ENCODE measurements at regions of chr5 and their contacts with region 1.

Region 1: GRCh38 chr5:139262742-139263445 is 30.6 kb upstream of the MATR3 start:
- DNase-seq: peak; percentile 31
- H3K4me3 ChIP-seq: no peak overlapping the region
- H3K27me3 ChIP-seq: peaks cover 5% of the 10 kb centered on the region
- CTCF ChIP-seq: peak; percentile 97

Region 2: GRCh38 chr5:138579517-138579863 is 683.4 kb before region 1 on chr5:
- CTCF ChIA-PET with region 1: interaction called, 10 read pairs
- POLR2A ChIA-PET with region 1: no interaction called
- DNase-seq: no peak
- H3K4me3 ChIP-seq: no peak overlapping the region
- H3K27me3 ChIP-seq: no peaks in the 10 kb centered on the region
- CTCF ChIP-seq: no peak

Region 3: DNA sequence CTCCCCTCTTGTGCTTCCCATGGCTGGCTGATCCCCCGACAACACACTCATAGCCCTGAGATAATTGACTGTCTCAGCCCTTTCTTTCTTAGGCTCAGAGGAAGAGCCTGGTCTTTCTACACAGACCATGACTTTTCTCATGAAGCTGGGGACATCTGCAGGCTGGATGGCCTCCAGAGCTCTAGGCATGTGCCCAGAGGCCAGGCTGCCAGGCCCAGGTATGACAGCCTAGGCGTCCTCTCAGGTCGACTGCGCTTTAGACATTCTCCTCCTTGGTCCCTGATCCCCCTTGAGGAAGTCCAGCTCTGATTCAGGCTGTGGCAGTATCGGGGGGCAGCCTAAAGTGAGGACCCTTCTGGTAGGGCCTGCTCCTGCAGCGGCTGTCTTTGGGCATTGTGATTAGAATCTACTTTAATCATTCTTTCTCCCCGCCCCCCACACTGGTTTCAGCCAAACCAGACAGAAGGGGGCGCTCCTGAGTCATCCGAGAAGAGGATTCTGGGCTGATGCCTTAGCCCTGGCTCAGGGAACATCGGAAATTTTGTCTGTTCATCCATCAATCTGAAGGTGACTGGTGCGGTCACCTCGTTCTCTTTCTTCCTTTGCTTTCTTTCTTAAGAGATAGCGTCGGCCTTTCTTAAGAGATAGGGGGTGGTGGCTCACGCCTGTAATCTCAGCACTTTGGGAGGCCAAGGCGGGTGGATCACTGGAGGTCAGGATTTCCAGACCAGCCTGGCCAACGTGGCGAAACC is 621.2 kb before region 1 on chr5:
- CTCF ChIA-PET with region 1: interaction called, 14 read pairs
- POLR2A ChIA-PET with region 1: no interaction called
- DNase-seq: no peak
- H3K4me3 ChIP-seq: no peak overlapping the region
- H3K27me3 ChIP-seq: peaks cover 3% of the 10 kb centered on the region
- CTCF ChIP-seq: peak; percentile 82

Region 4: GRCh38 chr5:139149477-139150199 is 113.3 kb before region 1 on chr5:
- CTCF ChIA-PET with region 1: no interaction called
- POLR2A ChIA-PET with region 1: no interaction called
- DNase-seq: no peak
- H3K4me3 ChIP-seq: no peak overlapping the region
- H3K27me3 ChIP-seq: no peaks in the 10 kb centered on the region
- CTCF ChIP-seq: no peak

Region 5: GRCh38 chr5:139215107-139215975 is 47.6 kb before region 1 on chr5:
- CTCF ChIA-PET with region 1: no interaction called
- POLR2A ChIA-PET with region 1: no interaction called
- DNase-seq: no peak
- H3K4me3 ChIP-seq: no peak overlapping the region
- H3K27me3 ChIP-seq: peaks cover 3% of the 10 kb centered on the region
- CTCF ChIP-seq: no peak

Region 6: DNA sequence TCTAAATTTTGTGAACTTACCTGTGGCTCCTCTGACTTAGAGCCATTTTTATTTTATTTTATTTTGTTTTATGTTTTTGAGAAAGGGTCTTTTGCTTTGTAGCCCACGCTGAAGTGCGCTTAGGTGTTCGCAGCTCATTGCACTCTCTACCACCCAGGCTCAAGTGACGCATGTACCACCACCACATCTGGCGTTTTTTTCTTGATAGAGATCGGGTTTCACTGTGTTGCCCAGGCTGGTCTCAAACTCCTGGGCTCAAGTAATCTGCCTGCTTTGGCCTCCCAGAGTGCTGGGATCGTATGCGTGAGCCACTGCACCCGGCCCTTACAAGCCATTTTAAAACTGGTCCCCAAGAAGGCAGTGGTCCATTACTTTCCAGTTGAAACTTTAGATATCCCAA is 49.2 kb after region 1 on chr5:
- CTCF ChIA-PET with region 1: no interaction called
- POLR2A ChIA-PET with region 1: no interaction called
- DNase-seq: no peak
- H3K4me3 ChIP-seq: no peak overlapping the region
- H3K27me3 ChIP-seq: no peaks in the 10 kb centered on the region
- CTCF ChIP-seq: no peak

Region 7: DNA sequence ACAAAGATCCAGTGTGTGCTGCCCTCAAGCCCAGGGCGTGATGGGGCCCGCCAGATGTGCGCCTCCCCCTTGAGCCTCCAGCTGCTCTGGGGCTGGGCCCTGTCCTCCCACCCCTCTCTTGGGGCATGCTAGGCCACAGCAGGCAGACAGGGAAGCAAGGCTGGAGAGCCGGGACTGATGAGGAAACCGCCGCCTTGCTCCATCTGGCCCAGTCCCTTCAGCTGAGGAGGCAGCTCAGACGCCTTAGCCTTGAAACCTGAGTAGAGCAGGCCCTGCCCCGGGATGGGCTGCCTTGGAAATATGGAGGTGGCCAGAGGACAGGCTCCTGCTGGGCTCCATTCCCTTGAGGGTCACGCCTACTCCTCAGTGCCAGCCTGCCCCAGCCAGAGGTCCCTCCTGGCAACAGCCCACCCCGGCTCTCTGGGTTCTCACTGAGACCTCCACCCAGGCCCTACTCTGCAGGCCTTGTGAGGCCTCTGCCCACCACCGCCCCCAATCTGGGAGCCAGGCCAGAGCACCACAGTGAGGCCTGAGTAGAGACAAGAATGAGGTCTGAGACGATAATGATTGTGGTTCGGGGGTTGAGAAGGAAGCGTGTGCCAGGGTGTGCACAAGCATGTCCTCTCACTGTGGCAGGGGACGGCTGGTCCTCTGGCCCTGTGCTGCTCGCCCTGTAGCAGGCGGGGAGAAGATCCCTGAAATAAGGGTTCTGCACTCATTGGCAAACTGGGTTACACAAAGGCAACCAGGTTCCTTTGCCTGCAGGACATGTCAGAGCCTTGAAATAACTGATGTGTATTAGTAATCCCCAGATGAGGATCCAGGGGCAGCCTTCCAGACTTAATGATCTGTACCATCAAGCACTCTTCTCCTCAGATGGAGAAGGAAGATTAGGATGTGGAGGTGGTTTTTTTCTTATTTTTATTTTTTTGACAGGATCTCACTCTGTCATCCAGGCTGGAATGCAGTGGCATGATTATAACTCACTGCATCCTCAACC is 416.2 kb after region 1 on chr5:
- CTCF ChIA-PET with region 1: no interaction called
- POLR2A ChIA-PET with region 1: no interaction called
- DNase-seq: no peak
- H3K4me3 ChIP-seq: no peak overlapping the region
- H3K27me3 ChIP-seq: no peaks in the 10 kb centered on the region
- CTCF ChIP-seq: no peak